Posterior vena cava (tissue), 2 donors: ENCODE measurements at regions of chr10 and their contacts with region 1.

Region 1: DNA sequence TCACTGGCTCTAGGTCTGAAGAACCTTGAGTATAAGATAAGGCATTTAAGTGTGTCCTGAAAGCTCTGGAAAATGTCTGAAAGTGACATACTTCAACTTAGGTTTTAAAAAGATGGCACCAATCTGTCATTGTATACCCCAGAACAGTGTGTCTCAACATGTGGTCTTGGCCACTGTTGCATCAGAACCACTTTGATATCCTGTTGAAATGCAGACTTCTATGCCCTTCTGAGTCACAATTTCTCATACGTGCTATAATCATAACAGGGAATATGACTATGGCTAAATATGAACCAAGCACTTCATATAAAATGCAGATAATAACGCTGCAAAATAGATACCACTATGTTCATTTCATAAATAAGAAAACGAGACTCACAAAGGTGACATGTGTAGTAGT is 38.0 kb upstream of the GPAM start:
- DNase-seq: no peak

Region 2: DNA sequence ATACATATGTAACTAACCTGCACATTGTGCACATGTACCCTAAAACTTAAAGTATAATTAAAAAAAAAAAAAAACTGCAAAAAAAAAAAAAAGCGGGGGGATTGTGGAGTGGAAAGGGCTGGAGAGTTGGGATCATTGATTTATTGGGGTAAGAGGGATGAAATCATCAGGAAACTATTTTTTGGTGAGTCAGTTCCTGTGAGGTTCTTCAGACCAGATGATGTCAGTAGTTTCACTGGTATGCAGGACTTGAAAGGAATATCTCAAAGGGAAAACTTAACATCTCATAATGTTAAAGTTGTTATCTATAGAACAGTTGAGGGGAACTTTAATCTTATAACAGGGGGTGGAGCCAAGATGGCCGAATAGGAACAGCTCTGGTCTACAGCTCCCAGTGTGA is 29.0 kb after region 1 on chr10:
- intact Hi-C with region 1: no loop called
- DNase-seq: no peak

Region 3: DNA sequence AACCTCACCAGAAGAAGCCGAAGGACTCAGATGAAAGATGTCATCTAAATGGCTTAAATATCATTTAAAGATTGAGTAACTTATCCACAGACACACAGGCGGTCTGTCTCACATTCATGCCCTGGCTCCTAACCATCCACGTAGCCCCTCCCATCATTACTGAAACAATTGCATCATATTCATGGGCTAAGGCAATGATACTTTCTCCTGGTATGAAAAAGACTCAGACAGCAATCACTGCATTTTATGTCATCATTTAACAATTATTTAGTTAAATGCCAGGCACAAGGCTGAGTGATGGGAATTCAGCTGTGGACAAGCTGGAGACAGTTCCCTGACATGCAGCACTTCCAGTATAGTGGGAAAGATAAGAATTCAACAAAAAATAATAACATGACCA is 50.4 kb after region 1 on chr10:
- intact Hi-C with region 1: no loop called
- DNase-seq: no peak

Region 4: GRCh38 chr10:112434988-112435619 is 213.6 kb after region 1 on chr10:
- intact Hi-C with region 1: loop called in 1 of 2 experiments (anchors 2 kb)
- DNase-seq: no peak

Region 5: DNA sequence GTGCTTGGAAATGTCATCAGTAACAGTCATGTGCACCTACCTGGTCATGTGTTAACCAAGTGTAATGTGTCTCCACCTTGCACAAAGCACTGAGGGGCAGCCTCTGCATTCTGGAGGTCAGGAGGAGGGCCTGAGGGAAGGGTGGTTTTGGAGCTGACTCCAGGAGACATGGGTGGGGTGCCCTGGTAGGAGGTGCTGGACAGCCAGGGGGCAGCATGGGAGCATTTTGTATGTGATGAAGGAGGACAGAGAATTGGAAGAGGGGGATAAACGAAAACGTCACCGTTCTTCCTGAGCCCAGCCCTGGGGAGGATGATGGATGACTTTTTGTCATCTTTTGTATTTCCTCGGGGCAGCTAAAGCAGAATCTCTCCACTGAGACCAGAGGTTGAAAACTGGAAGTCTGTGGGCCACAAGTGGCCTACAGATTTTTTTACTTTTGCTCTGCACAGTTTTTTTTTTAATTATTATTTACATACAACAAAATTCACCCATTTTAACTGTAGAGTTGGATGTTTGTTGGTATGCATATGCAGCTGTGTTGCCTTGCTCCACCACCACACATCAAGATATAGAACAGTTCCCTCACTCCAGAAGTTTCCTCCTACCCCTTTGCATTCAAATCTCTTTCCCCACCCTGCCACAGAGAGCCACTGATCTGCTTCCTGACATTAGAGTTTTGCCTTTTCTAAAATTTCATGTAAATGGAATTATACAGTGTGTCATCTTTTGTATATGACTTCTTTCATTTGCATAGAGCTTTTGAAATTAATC is 467.9 kb after region 1 on chr10:
- intact Hi-C with region 1: no loop called
- DNase-seq: no peak